ENCODE measurements at regions of chr1 and their contacts with region 1.

Region 1: GRCh38 chr1:204363335-204364124 is 3.8 kb upstream of the PLEKHA6 start:
- DNase-seq: peak; percentile 51
- H3K4me3 ChIP-seq: peak overlapping the region; percentile 50
- H3K27ac ChIP-seq: no peak overlapping the region
- H3K27me3 ChIP-seq: peaks cover 9% of the 10 kb centered on the region
- CTCF ChIP-seq: peak; percentile 94

Region 2: DNA sequence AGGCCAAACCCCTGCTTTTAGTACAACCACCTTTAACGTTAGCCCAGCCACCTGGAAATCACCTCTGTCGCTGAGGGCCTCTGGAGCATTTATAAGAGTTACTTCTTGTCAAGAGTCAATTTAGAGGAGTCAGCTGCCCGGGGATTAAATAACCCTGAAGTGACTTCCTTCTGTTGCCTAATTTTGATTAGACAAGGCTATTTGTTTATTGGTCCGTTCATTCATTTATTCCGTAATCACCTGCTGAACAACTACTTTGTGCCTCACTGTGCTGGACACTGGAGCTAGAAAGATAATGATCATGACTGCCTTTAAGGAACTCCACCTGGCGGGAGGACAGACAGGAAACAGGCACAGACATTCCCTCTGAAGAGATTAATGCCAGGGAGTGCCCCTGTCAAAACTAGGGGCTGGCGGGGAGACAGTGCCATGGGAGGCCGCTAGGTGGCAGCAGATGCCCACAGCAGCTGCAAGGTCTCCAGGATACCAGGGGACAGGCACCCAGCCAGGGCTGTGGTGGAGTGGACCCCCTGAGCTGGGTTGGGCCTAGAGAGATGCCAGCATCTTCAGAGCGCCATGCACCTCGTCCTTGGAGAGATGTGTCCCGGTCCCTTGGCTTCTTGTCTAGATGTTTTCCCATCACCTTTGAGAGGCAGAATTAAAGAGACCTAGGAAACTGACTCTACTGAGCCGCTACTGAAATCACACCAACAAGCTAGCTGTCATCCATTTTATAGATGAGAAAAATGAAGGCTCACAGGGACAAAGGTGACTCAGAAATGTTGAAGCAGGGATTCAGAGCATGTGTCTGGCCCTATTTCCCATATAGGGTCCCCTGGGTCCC is 201.1 kb before region 1 on chr1:
- in situ Hi-C with region 1: loop called (anchors 25 kb)
- DNase-seq: peak; percentile 65
- H3K4me3 ChIP-seq: no peak overlapping the region
- H3K27ac ChIP-seq: no peak overlapping the region
- H3K27me3 ChIP-seq: no peaks in the 10 kb centered on the region
- CTCF ChIP-seq: peak; percentile 100

Measured in brain microvascular endothelial cell (primary cell).